Activated B cell treated with CpG ODN at 0.5 μM for 24 hours (primary cell): ENCODE measurements at regions of chr6 and their contacts with region 1.

Region 1: DNA sequence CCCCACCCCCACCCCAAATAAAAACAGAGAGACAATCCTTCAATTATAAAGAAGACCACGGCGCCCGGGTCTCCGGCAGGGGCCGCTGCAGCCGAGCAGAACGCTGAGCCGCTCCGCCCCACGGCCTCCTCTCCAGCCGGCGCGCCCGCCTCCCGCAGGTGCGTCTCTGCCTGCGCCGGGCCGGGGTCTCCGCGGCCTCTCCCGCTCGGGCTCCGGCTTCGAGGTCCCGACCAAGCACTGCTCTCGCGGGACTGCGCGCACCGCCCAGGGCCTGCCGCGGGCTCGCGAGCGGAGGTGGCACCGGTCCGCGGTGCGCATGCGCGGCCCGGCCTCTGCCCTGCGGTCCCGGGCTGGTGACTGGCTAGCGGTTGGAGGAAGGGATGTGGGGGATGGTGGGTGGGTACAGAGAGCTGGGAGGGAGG is 241 bp upstream of the SIRT5 start:
- DNase-seq: peak; percentile 89
- ATAC-seq: peak; percentile 84
- H3K4me3 Mint-ChIP-seq: peak overlapping the region; percentile 90
- H3K27ac Mint-ChIP-seq: peak overlapping the region; percentile 94
- H3K4me1 Mint-ChIP-seq: peaks cover 23% of the 10 kb centered on the region
- H3K27me3 Mint-ChIP-seq: no peaks in the 10 kb centered on the region
- CTCF ChIP-seq: no peak

Region 2: GRCh38 chr6:13355043-13355951 is 218.9 kb before region 1 on chr6:
- CTCF ChIA-PET with region 1: interaction called, 10 read pairs
- POLR2A ChIA-PET with region 1: interaction called, 8 read pairs
- intact Hi-C with region 1: no loop called
- DNase-seq: no peak
- ATAC-seq: peak; percentile 46
- H3K4me3 Mint-ChIP-seq: peak overlapping the region; percentile 70
- H3K27ac Mint-ChIP-seq: peak overlapping the region; percentile 92
- H3K4me1 Mint-ChIP-seq: peaks cover 70% of the 10 kb centered on the region
- H3K27me3 Mint-ChIP-seq: no peaks in the 10 kb centered on the region
- CTCF ChIP-seq: no peak

Region 3: DNA sequence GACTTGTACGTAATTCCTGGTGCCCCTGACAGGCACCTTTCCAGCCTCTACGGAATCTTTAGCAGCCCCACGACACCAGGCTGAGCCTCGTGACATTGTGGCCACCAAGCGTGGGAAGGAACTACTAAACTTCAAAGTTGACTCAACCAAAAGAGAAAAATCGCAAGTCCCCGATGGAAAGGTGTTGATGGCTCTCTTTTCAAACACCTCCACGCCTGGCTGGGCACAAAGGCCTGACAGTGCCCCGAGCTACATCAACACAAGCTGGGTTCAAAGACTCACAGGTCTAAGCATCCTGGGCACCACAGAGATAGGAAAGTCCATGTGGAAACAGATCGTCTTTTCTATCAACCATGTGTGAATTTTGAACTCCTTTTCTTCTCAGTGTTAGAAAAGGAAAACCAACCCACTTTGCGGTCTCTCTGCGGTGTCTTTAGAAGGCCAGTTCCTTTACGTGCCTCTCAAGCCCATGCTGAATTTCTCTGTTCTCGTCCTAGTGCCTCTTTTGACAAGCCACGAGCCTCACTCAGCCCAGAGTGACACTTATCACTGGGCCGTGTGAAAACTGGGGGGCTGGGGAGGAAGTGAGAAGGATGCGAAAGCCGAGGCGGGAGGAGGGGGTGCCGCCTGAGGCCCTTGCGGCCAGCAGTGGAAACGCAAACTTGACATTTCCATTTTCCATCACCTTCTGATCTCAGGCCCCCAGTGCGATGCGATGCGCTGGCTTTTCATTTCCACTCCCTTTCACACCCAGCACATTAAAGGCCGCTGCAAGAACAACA is 146.2 kb before region 1 on chr6:
- CTCF ChIA-PET with region 1: interaction called, 4 read pairs
- POLR2A ChIA-PET with region 1: interaction called, 6 read pairs
- intact Hi-C with region 1: loop called (anchors 1 kb)
- DNase-seq: peak; percentile 58
- ATAC-seq: peak; percentile 86
- H3K4me3 Mint-ChIP-seq: peak overlapping the region; percentile 80
- H3K27ac Mint-ChIP-seq: peak overlapping the region; percentile 95
- H3K4me1 Mint-ChIP-seq: peaks cover 68% of the 10 kb centered on the region
- H3K27me3 Mint-ChIP-seq: no peaks in the 10 kb centered on the region
- CTCF ChIP-seq: no peak

Region 4: DNA sequence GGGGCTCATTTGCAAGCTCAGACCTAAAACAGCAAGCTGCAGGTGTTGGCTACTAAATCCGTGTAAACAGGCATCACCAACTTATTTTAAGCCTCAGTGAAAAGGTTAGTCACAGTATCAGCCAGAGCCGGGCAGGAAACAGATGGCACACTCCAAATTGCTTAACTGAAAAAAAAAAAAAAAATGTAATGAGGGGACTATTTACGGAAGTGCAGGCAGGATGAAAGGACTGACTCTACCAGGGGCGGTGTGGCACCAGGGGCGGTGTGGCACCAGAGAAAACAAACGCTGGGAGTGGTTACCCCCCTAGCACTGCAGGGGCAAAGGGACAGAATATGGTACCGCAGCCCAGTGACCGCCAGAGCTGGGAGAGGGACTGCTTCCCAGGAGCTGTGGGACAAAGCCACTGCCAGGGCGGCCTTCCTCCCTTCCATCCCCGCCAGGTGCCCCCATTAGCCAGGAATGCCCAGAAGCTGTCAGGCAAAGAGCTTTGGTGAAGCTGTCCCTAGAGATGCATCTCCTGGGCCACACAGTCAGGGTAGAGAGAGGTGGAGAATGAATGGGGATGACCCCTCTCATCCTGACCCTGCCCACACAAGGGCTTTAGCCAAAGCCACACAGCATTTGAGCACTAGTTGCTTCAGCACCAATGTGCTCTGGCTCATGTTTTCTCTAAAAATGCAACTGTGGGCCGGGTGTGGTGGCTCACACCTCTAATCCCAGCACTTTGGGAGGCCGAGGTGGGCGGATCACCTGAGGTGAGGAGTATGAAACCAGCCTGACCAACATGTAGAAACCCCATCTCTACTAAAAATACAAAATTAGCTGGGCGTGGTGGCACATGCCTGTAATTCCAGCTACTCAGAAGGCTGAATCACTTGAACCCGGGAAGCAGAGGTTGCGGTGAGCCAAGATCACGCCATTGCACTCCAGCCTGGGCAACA is 47.2 kb before region 1 on chr6:
- CTCF ChIA-PET with region 1: interaction called, 9 read pairs
- POLR2A ChIA-PET with region 1: interaction called, 19 read pairs
- intact Hi-C with region 1: loop called (anchors 1 kb)
- DNase-seq: peak; percentile 41
- ATAC-seq: peak; percentile 90
- H3K4me3 Mint-ChIP-seq: peak overlapping the region; percentile 3
- H3K27ac Mint-ChIP-seq: peak overlapping the region; percentile 78
- H3K4me1 Mint-ChIP-seq: peaks cover 47% of the 10 kb centered on the region
- H3K27me3 Mint-ChIP-seq: no peaks in the 10 kb centered on the region
- CTCF ChIP-seq: no peak

Region 5: DNA sequence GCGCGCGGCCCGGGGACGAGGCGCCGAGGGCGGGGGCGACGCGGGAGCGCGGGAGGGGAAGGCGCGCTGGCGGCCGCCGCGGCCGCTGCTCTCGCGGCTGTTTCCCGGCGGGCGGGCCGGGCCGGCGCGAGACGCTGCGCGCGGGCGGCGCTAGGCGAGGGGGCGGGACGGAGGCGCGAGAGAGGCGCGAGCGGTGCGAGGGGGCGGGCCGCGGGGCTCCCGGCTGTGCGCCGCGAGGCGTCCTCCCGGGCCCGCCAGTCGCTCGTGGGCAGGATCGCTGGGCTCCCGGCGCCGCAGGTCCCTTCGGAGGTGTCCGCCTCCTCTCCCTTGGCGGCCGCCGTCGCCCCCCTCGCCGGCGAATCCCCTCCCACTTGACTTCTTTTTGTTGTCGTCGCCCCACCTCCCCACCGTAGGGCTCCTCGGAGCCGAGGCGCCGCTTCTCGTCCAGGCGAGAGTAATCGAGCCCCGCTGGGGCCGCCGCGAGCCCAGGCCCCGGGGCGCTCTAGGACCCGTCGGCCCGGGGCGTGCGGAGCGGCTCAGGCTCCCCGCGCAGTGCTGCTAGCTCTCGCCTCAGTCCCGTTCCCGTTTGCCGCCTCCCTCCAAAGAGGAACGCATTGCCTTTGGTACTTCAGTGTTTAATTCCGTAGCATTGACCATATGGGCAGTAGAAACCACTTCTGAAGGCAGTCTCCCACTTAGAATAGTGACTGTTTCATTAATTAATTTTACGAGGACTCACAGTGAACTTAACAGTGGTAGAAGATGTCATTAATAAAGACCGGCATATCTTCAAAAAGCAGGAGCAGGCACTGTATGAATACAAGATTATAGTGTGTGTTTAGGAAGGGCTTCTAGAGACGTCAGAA is 137.8 kb after region 1 on chr6 and contains the start of gene RANBP9:
- CTCF ChIA-PET with region 1: no interaction called
- POLR2A ChIA-PET with region 1: interaction called, 10 read pairs
- intact Hi-C with region 1: loop called (anchors 1 kb)
- DNase-seq: peak; percentile 92
- ATAC-seq: peak; percentile 83
- H3K4me3 Mint-ChIP-seq: peak within 1 kb of the TSS; percentile 97
- H3K27ac Mint-ChIP-seq: peak within 1 kb of the TSS; percentile 99
- H3K4me1 Mint-ChIP-seq: peaks cover 44% of the 10 kb centered on the region
- H3K27me3 Mint-ChIP-seq: no peaks in the 10 kb centered on the region
- CTCF ChIP-seq: no peak
- total RNA-seq, gene RANBP9: 30.7 and 34.7 TPM in 2 replicates

Region 6: DNA sequence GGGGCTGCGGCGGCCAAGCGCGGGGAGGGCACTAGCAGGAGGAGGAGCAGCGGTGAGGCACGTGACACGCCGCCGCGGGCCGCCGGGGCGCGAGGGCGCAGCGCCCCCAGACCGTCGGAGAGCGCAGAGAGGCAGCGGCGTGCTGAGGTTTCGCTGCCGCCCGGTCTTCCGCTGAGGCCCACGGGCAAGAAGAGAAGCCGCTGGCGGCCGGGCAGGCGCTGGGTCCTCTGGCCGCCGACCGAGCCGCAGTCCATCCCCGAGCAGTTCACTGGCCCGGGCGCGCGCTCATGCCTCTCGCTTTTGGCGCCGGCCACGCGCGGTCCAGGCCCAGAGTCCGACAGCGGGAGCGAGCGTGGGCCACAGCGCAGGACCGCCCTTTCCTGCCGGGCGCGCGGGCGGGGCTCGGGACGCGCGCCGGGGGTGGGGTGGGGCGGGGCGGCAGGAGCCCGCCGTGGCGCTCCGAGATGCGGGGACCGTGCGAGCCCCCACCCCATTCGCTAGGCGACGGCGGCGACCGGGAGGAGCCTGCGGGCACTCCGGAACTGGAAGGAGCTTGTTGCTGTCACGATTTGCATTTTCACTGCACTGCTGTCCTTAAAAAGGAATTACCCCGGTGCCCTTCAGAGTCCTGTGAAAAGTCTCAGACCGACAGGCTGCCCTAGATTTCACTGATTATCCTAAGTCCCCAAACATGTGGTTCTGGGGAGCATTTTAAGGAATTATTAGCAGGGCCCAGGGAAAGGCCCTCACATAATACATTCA is 240.2 kb after region 1 on chr6 and contains the start of gene MCUR1:
- CTCF ChIA-PET with region 1: no interaction called
- POLR2A ChIA-PET with region 1: interaction called, 4 read pairs
- intact Hi-C with region 1: loop called (anchors 1 kb)
- DNase-seq: peak; percentile 81
- ATAC-seq: peak; percentile 83
- H3K4me3 Mint-ChIP-seq: peak within 1 kb of the TSS; percentile 91
- H3K27ac Mint-ChIP-seq: peak within 1 kb of the TSS; percentile 87
- H3K4me1 Mint-ChIP-seq: peaks cover 32% of the 10 kb centered on the region
- H3K27me3 Mint-ChIP-seq: no peaks in the 10 kb centered on the region
- CTCF ChIP-seq: no peak
- total RNA-seq, gene MCUR1: 13.6 and 14.1 TPM in 2 replicates